PC-3 (cell line): ENCODE measurements at regions of chr4 and their contacts with region 1.

Region 1: GRCh38 chr4:78809928-78810835 is 34.0 kb downstream of the BMP2K start:
- DNase-seq: no peak
- ATAC-seq: no peak
- H3K4me3 ChIP-seq: no peak overlapping the region
- H3K27ac ChIP-seq: no peak overlapping the region
- H3K4me1 ChIP-seq: no peaks in the 10 kb centered on the region
- H3K27me3 ChIP-seq: no peaks in the 10 kb centered on the region
- CTCF ChIP-seq: no peak

Region 2: DNA sequence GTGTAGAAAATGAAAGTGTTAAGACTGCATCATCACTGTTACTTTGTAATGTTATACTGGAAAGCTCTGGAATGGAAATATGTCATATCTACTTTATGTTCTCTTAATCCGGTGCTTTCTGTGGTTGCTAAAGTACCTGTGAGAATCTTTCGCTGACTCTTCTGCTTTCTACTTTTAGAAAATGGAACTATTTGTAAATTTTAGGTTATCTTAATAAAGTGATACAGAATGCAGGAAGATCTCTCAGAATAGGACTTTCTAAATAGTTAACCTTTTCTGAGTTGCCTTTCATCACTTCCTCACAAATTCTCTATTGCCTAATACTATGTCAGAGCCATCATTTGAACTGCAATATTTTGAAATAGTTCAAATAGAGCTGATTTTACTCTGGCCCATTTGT is 35.3 kb after region 1 on chr4:
- CTCF ChIA-PET with region 1: no interaction called
- POLR2A ChIA-PET with region 1: no interaction called
- intact Hi-C with region 1: loop called (anchors 5 kb)
- DNase-seq: no peak
- ATAC-seq: no peak
- H3K4me3 ChIP-seq: no peak overlapping the region
- H3K27ac ChIP-seq: no peak overlapping the region
- H3K4me1 ChIP-seq: no peaks in the 10 kb centered on the region
- H3K27me3 ChIP-seq: no peaks in the 10 kb centered on the region
- CTCF ChIP-seq: no peak